CD8-positive, alpha-beta T cell (primary cell): ENCODE measurements at regions of chr19 and their contacts with region 1.

Region 1: DNA sequence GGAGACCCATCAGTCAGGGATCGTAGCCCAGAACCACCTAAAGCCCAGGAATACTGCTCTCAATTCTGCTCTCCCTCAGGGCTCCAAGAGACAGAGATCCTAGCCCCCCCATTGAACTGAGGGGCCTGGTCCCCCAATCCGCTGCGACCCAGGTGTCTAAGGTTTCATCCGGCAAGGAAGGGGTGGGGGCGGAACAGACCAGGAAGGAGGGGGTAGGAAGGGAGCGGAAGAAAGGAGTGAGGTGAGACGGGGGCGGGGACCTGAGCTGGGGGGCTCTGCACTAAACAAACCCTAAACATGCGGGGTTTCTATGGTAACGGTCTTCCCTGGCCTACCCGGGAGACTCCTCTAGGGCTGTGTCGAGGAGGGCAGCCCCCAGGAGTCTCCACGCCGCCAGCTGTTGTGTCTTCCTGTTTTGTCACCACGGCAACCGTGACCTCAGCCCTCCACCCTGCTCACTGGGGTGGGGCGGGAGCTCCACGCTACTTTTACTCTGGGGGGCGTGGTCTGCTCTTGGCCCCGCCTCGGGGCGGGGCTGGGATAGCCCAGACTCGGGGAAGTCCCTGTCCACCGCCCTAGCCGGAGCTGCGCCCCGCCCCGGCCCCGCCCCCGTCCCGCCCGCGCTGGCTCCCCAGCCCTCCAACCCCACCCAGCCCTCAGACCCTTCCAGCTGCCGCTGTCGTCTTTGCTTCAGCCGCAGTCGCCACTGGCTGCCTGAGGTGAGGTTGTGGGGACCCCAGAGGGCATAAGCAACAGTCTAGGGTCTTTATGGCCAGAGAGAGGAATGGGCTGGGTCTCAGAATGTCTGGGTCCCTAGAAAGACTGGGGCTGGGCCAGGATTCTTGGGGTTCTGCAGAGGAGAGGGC is at the start of gene MYADM:
- DNase-seq: peak; percentile 99 to 100 (median 100)
- ATAC-seq: peak; percentile 72
- H3K4me3 ChIP-seq: peak within 1 kb of the TSS; percentile 96 to 97
- H3K4me3 Mint-ChIP-seq: peak within 1 kb of the TSS; percentile 98
- H3K27ac ChIP-seq: peak within 1 kb of the TSS; percentile 98 to 99
- H3K27ac Mint-ChIP-seq: peak within 1 kb of the TSS; percentile 96
- H3K4me1 ChIP-seq: peaks cover 32% of the 10 kb centered on the region
- H3K4me1 Mint-ChIP-seq: peaks cover 39% of the 10 kb centered on the region
- H3K27me3 ChIP-seq: no peaks in the 10 kb centered on the region
- H3K27me3 Mint-ChIP-seq: no peaks in the 10 kb centered on the region
- CTCF ChIP-seq: no peak
- total RNA-seq, gene MYADM: 241 to 251 TPM

Region 2: GRCh38 chr19:53195265-53195903 is 672.1 kb before region 1 on chr19:
- CTCF ChIA-PET with region 1: no interaction called
- POLR2A ChIA-PET with region 1: no interaction called
- intact Hi-C with region 1: loop called (anchors 5 to 10 kb)
- DNase-seq: peak; percentile 48 to 86 (median 75)
- ATAC-seq: peak; percentile 50
- H3K4me3 ChIP-seq: no peak overlapping the region
- H3K4me3 Mint-ChIP-seq: peak overlapping the region; percentile 19
- H3K27ac ChIP-seq: no peak overlapping the region
- H3K27ac Mint-ChIP-seq: peak overlapping the region; percentile 24
- H3K4me1 ChIP-seq: peaks cover 16% of the 10 kb centered on the region
- H3K4me1 Mint-ChIP-seq: peaks cover 48% of the 10 kb centered on the region
- H3K27me3 ChIP-seq: no peaks in the 10 kb centered on the region
- H3K27me3 Mint-ChIP-seq: no peaks in the 10 kb centered on the region
- CTCF ChIP-seq: peak; percentile 90

Region 3: GRCh38 chr19:53537480-53538383 is 329.7 kb before region 1 on chr19 and contains the start of gene ZNF331:
- CTCF ChIA-PET with region 1: no interaction called
- POLR2A ChIA-PET with region 1: no interaction called
- intact Hi-C with region 1: loop called in 1 of 2 experiments (anchors 5 kb)
- DNase-seq: peak; percentile 74 to 97 (median 91)
- ATAC-seq: peak; percentile 78
- H3K4me3 ChIP-seq: peak within 1 kb of the TSS; percentile 71 to 87
- H3K4me3 Mint-ChIP-seq: peak within 1 kb of the TSS; percentile 94
- H3K27ac ChIP-seq: peak within 1 kb of the TSS; percentile 94 to 100
- H3K27ac Mint-ChIP-seq: peak within 1 kb of the TSS; percentile 98
- H3K4me1 ChIP-seq: peaks cover 11% of the 10 kb centered on the region
- H3K4me1 Mint-ChIP-seq: peaks cover 30% of the 10 kb centered on the region
- H3K27me3 ChIP-seq: no peaks in the 10 kb centered on the region
- H3K27me3 Mint-ChIP-seq: no peaks in the 10 kb centered on the region
- CTCF ChIP-seq: no peak
- total RNA-seq, gene ZNF331: 784 to 793 TPM

Region 4: GRCh38 chr19:53879140-53880081 is 12.0 kb after region 1 on chr19:
- CTCF ChIA-PET with region 1: interaction called, 19 read pairs
- POLR2A ChIA-PET with region 1: interaction called, 39 read pairs
- intact Hi-C with region 1: loop called (anchors 1 kb)
- DNase-seq: peak; percentile 70 to 89 (median 79)
- ATAC-seq: peak; percentile 80
- H3K4me3 ChIP-seq: peak overlapping the region; percentile 53 to 55
- H3K4me3 Mint-ChIP-seq: no peak overlapping the region
- H3K27ac ChIP-seq: no peak overlapping the region
- H3K27ac Mint-ChIP-seq: no peak overlapping the region
- H3K4me1 ChIP-seq: peaks cover 76% of the 10 kb centered on the region
- H3K4me1 Mint-ChIP-seq: peaks cover 50% of the 10 kb centered on the region
- H3K27me3 ChIP-seq: peaks cover 36 to 39% of the 10 kb centered on the region in 2 experiments
- H3K27me3 Mint-ChIP-seq: peaks cover 11% of the 10 kb centered on the region
- CTCF ChIP-seq: no peak

Region 5: GRCh38 chr19:53906211-53907192 is 39.0 kb after region 1 on chr19:
- CTCF ChIA-PET with region 1: no interaction called
- POLR2A ChIA-PET with region 1: no interaction called
- intact Hi-C with region 1: no loop called
- DNase-seq: peak; percentile 52 to 81 (median 73)
- ATAC-seq: peak; percentile 81
- H3K4me3 ChIP-seq: no peak overlapping the region
- H3K4me3 Mint-ChIP-seq: peak overlapping the region; percentile 29
- H3K27ac ChIP-seq: no peak overlapping the region
- H3K27ac Mint-ChIP-seq: no peak overlapping the region
- H3K4me1 ChIP-seq: peaks cover 25% of the 10 kb centered on the region
- H3K4me1 Mint-ChIP-seq: peaks cover 24% of the 10 kb centered on the region
- H3K27me3 ChIP-seq: peaks cover 39 to 42% of the 10 kb centered on the region in 2 experiments
- H3K27me3 Mint-ChIP-seq: peaks cover 73% of the 10 kb centered on the region
- CTCF ChIP-seq: peak; percentile 80

Region 6: GRCh38 chr19:54035215-54036178 is 168.0 kb after region 1 on chr19:
- CTCF ChIA-PET with region 1: no interaction called
- POLR2A ChIA-PET with region 1: no interaction called
- intact Hi-C with region 1: no loop called
- DNase-seq: no peak
- ATAC-seq: no peak
- H3K4me3 ChIP-seq: no peak overlapping the region
- H3K4me3 Mint-ChIP-seq: no peak overlapping the region
- H3K27ac ChIP-seq: no peak overlapping the region
- H3K27ac Mint-ChIP-seq: no peak overlapping the region
- H3K4me1 ChIP-seq: no peaks in the 10 kb centered on the region
- H3K4me1 Mint-ChIP-seq: no peaks in the 10 kb centered on the region
- H3K27me3 ChIP-seq: no peaks in the 10 kb centered on the region
- H3K27me3 Mint-ChIP-seq: peaks cover 18% of the 10 kb centered on the region
- CTCF ChIP-seq: no peak

Region 7: DNA sequence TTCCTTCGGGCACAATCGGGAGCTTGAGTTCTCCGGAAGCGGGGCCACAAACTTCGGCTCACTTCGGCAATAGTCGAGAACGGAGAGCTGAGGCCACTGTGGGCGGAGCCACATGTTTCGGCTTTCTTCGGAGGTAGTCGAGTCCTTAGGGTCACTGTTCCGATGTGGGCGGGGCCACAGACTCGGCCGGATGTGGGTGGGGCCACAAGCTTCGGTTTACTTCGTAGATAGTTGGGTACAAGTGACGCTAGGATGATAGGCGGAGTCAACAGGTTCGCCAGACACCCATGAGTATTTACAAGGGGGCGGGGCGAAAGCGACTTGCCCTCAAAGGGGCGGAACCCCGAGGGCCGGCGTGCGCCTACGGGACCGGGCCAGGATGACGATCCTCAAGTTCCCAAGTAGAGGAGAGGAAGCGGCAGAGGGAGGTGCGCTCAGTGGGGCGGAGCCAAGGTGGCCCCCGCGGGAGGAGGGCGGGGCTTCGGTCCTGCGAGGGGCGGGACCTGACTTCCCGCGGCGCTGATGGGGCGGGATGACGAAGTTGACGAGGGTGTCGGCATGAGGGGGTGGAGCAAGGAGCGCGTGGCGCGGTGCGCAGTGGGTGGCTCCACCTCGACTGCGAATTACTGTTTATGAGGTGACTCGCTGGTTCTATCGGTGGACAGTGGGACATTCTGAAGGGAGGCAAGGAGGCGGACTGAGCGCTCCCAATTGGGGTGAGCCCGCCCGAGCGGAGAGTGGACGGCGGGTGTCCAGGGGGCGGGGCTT is 322.5 kb after region 1 on chr19:
- CTCF ChIA-PET with region 1: no interaction called
- POLR2A ChIA-PET with region 1: interaction called, 4 read pairs
- intact Hi-C with region 1: loop called in 1 of 2 experiments (anchors 1 kb)
- DNase-seq: peak; percentile 99 to 100 (median 100)
- ATAC-seq: peak; percentile 62
- H3K4me3 ChIP-seq: peak overlapping the region; percentile 69 to 76
- H3K4me3 Mint-ChIP-seq: peak overlapping the region; percentile 91
- H3K27ac ChIP-seq: peak overlapping the region; percentile 100
- H3K27ac Mint-ChIP-seq: peak overlapping the region; percentile 100
- H3K4me1 ChIP-seq: peaks cover 22% of the 10 kb centered on the region
- H3K4me1 Mint-ChIP-seq: peaks cover 38% of the 10 kb centered on the region
- H3K27me3 ChIP-seq: no peaks in the 10 kb centered on the region
- H3K27me3 Mint-ChIP-seq: no peaks in the 10 kb centered on the region
- CTCF ChIP-seq: no peak

Region 8: GRCh38 chr19:54463531-54464043 is 596.1 kb after region 1 on chr19 and contains the start of gene LENG9:
- CTCF ChIA-PET with region 1: no interaction called
- POLR2A ChIA-PET with region 1: no interaction called
- intact Hi-C with region 1: loop called (anchors 1 to 5 kb)
- DNase-seq: peak; percentile 81 to 100 (median 91)
- ATAC-seq: peak; percentile 70
- H3K4me3 ChIP-seq: peak within 1 kb of the TSS; percentile 79 to 83
- H3K4me3 Mint-ChIP-seq: peak within 1 kb of the TSS; percentile 86
- H3K27ac ChIP-seq: peak within 1 kb of the TSS; percentile 81 to 84
- H3K27ac Mint-ChIP-seq: peak within 1 kb of the TSS; percentile 93
- H3K4me1 ChIP-seq: peaks cover 20% of the 10 kb centered on the region
- H3K4me1 Mint-ChIP-seq: peaks cover 36% of the 10 kb centered on the region
- H3K27me3 ChIP-seq: no peaks in the 10 kb centered on the region
- H3K27me3 Mint-ChIP-seq: no peaks in the 10 kb centered on the region
- CTCF ChIP-seq: no peak
- total RNA-seq, gene LENG9: 2.3 to 2.7 TPM